CD8-positive, alpha-beta T cell (primary cell): ENCODE measurements at regions of chr2 and their contacts with region 1.

Region 1: GRCh38 chr2:30447149-30448045 is at the start of gene LCLAT1:
- DNase-seq: peak; percentile 66 to 95 (median 84)
- ATAC-seq: peak; percentile 88
- H3K4me3 ChIP-seq: peak within 1 kb of the TSS; percentile 87 to 99
- H3K4me3 Mint-ChIP-seq: peak within 1 kb of the TSS; percentile 94
- H3K27ac ChIP-seq: peak within 1 kb of the TSS; percentile 92 to 95
- H3K27ac Mint-ChIP-seq: peak within 1 kb of the TSS; percentile 98
- H3K4me1 ChIP-seq: peaks cover 20% of the 10 kb centered on the region
- H3K4me1 Mint-ChIP-seq: peaks cover 45% of the 10 kb centered on the region
- H3K27me3 ChIP-seq: no peaks in the 10 kb centered on the region
- H3K27me3 Mint-ChIP-seq: no peaks in the 10 kb centered on the region
- CTCF ChIP-seq: no peak
- total RNA-seq, gene LCLAT1: 11.3 to 12.1 TPM

Region 2: DNA sequence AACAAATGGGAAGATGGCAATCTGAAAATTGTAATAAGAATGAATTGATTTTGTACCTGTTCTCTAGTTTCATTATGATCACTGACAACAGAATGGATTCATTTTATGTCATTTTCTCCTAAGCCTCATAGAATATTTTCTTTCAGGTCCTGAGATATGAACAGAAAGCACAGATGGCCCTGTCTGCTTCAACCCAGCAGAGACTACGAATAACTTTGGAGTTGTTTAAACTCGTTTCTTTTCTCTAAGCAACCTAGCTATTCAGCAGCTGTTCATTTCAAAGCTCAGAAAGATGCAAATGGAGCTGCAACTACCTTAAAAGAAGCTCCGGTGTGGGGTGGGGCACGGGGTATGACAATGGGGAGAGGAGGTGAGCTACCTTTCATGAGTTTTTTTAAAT is 651.0 kb before region 1 on chr2:
- CTCF ChIA-PET with region 1: no interaction called
- POLR2A ChIA-PET with region 1: no interaction called
- intact Hi-C with region 1: no loop called
- DNase-seq: no peak
- ATAC-seq: no peak
- H3K4me3 ChIP-seq: no peak overlapping the region
- H3K4me3 Mint-ChIP-seq: no peak overlapping the region
- H3K27ac ChIP-seq: no peak overlapping the region
- H3K27ac Mint-ChIP-seq: no peak overlapping the region
- H3K4me1 ChIP-seq: no peaks in the 10 kb centered on the region
- H3K4me1 Mint-ChIP-seq: no peaks in the 10 kb centered on the region
- H3K27me3 ChIP-seq: no peaks in the 10 kb centered on the region
- H3K27me3 Mint-ChIP-seq: peaks cover 7% of the 10 kb centered on the region
- CTCF ChIP-seq: no peak

Region 3: DNA sequence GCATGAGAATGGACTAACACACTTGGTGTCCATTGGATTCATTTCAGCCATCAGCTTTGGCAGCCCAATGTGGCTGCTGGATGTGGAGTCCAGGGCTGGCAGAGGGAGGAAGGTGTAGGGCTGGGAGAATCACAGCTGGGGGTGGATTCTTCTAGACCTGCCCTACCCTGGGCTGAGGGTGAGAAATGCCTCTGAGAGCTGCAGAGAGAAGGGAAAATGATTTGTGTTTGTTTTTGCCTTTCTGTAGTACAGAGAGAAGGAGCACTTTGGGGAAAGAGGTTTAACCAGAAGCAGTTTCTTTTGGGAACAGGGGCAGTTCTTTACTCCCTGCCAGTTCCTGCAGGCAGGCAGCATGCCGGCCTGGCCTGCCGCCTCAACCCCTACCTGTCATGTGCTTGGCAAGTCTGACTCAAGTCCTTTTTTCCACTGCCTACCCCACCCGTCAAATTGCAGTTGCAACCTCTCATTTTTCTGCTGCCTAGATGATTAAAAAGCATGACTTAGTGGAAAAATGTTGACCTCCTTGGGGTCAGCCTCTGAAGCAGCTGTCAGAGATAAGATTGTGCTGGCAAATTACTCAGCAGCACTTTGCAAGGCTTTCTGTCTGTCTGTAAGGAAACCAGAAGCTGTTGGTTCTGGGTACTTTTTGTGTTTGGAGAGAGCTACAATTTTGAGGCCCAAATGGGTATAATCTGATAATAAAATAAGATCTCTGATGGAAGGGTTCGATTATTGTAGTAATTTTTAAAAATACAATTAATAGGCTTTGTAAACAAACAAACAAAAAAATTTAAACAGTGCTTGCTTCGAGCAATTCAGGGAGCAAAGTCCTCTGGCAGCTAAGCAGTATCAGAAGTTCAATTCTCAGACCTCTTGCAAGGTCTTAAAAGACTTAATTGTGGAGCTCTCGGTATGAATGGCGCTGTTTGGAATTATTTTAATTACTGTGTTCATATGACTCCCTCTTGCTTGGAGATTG is 194.4 kb before region 1 on chr2:
- CTCF ChIA-PET with region 1: no interaction called
- POLR2A ChIA-PET with region 1: interaction called, 5 read pairs
- intact Hi-C with region 1: loop called in 1 of 2 experiments (anchors 5 kb)
- DNase-seq: peak in 7 of 9 experiments; percentile 36 to 64 (median 55)
- ATAC-seq: peak; percentile 37
- H3K4me3 ChIP-seq: peak overlapping the region in 1 of 2 experiments; percentile 17
- H3K4me3 Mint-ChIP-seq: peak overlapping the region; percentile 46
- H3K27ac ChIP-seq: peak overlapping the region; percentile 28 to 68
- H3K27ac Mint-ChIP-seq: peak overlapping the region; percentile 98
- H3K4me1 ChIP-seq: peaks cover 97% of the 10 kb centered on the region
- H3K4me1 Mint-ChIP-seq: peaks cover 96% of the 10 kb centered on the region
- H3K27me3 ChIP-seq: no peaks in the 10 kb centered on the region
- H3K27me3 Mint-ChIP-seq: no peaks in the 10 kb centered on the region
- CTCF ChIP-seq: no peak

Region 4: GRCh38 chr2:30366199-30366691 is 81.2 kb before region 1 on chr2:
- CTCF ChIA-PET with region 1: no interaction called
- POLR2A ChIA-PET with region 1: interaction called, 4 read pairs
- intact Hi-C with region 1: loop called in 1 of 2 experiments (anchors 5 kb)
- DNase-seq: peak in 6 of 9 experiments; percentile 25 to 68 (median 37)
- ATAC-seq: peak; percentile 70
- H3K4me3 ChIP-seq: no peak overlapping the region
- H3K4me3 Mint-ChIP-seq: no peak overlapping the region
- H3K27ac ChIP-seq: no peak overlapping the region
- H3K27ac Mint-ChIP-seq: peak overlapping the region; percentile 19
- H3K4me1 ChIP-seq: peaks cover 33% of the 10 kb centered on the region
- H3K4me1 Mint-ChIP-seq: peaks cover 49% of the 10 kb centered on the region
- H3K27me3 ChIP-seq: no peaks in the 10 kb centered on the region
- H3K27me3 Mint-ChIP-seq: no peaks in the 10 kb centered on the region
- CTCF ChIP-seq: no peak

Region 5: GRCh38 chr2:30465171-30465545 is 17.8 kb after region 1 on chr2:
- CTCF ChIA-PET with region 1: no interaction called
- POLR2A ChIA-PET with region 1: no interaction called
- intact Hi-C with region 1: loop called (anchors 2 kb)
- DNase-seq: peak in 1 of 9 experiments; percentile 14
- ATAC-seq: no peak
- H3K4me3 ChIP-seq: no peak overlapping the region
- H3K4me3 Mint-ChIP-seq: peak overlapping the region; percentile 60
- H3K27ac ChIP-seq: peak overlapping the region in 1 of 2 experiments; percentile 7
- H3K27ac Mint-ChIP-seq: peak overlapping the region; percentile 37
- H3K4me1 ChIP-seq: peaks cover 29% of the 10 kb centered on the region
- H3K4me1 Mint-ChIP-seq: peaks cover 47% of the 10 kb centered on the region
- H3K27me3 ChIP-seq: no peaks in the 10 kb centered on the region
- H3K27me3 Mint-ChIP-seq: no peaks in the 10 kb centered on the region
- CTCF ChIP-seq: no peak

Region 6: DNA sequence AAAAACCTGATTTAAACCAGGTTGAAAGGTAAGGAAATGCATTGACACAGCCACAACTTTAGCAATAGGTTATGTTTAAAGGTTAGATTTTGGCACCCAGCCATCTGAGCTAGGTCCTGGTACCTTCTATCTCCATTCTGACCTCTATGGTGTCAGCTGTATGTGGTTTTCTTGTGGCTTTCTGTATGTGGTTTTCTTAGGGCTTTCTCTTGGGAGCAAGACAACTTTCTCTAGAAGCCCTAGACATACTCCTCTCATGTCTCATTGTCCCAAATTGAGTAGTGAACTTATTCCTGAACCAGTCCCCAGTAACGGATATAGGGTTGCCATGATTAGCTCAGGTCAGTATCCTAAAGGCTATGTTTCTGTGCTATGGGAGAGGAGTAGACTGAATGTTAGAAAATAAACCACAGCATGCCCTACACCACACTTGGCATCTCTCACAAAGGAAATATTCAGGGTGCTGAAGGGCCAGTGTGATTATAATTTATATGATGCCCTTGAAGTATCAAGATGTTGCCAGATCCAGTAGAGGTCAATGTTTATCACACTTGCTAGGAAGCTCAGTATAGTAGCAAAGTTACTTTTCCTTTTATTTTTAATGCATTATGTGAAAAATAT is 183.8 kb after region 1 on chr2:
- CTCF ChIA-PET with region 1: no interaction called
- POLR2A ChIA-PET with region 1: no interaction called
- intact Hi-C with region 1: no loop called
- DNase-seq: peak in 2 of 9 experiments; percentile 38 to 54
- ATAC-seq: no peak
- H3K4me3 ChIP-seq: no peak overlapping the region
- H3K4me3 Mint-ChIP-seq: no peak overlapping the region
- H3K27ac ChIP-seq: no peak overlapping the region
- H3K27ac Mint-ChIP-seq: no peak overlapping the region
- H3K4me1 ChIP-seq: peaks cover 19% of the 10 kb centered on the region
- H3K4me1 Mint-ChIP-seq: peaks cover 23% of the 10 kb centered on the region
- H3K27me3 ChIP-seq: no peaks in the 10 kb centered on the region
- H3K27me3 Mint-ChIP-seq: no peaks in the 10 kb centered on the region
- CTCF ChIP-seq: no peak